CD4-positive, alpha-beta memory T cell (primary cell): ENCODE measurements at regions of chr10 and their contacts with region 1.

Region 1: DNA sequence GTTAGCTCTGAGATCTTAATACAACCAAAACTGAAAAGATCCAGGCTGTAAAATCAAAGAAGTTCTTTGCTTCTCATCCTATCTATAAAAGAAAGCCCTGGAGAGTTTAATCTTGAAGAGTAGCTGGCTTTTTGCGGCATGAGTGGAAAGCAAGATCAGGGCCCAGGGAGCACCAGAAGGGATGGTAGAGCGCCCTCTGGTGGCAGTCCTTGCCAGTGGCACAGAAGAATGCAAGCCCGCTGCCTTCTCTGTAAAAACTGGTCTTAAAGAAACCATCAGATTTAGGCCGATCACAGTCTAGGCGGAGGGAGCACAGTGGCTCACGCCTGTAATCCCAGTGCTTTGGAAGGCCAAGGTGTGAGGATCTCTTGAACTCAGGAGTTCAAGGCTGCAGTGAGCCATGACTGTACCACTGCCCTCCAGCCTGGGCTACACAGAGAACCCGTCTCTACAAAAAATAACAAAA is 35.6 kb downstream of the CPN1 start:
- DNase-seq: peak; percentile 63 to 70 (median 67)
- H3K4me3 ChIP-seq: no peak overlapping the region
- H3K4me3 Mint-ChIP-seq: no peak overlapping the region
- H3K27ac ChIP-seq: no peak overlapping the region
- H3K27ac Mint-ChIP-seq: peak overlapping the region in 1 of 7 donors; percentile 42
- H3K4me1 ChIP-seq: no peaks in the 10 kb centered on the region
- H3K4me1 Mint-ChIP-seq: no peaks in the 10 kb centered on the region
- H3K27me3 ChIP-seq: no peaks in the 10 kb centered on the region
- H3K27me3 Mint-ChIP-seq: peaks cover 1 to 16% of the 10 kb centered on the region in 2 donors

Region 2: GRCh38 chr10:99506416-99506815 is 539.6 kb before region 1 on chr10:
- CTCF ChIA-PET with region 1: no interaction called
- POLR2A ChIA-PET with region 1: no interaction called
- intact Hi-C with region 1: no loop called
- DNase-seq: no peak
- H3K4me3 ChIP-seq: no peak overlapping the region
- H3K4me3 Mint-ChIP-seq: no peak overlapping the region
- H3K27ac ChIP-seq: no peak overlapping the region
- H3K27ac Mint-ChIP-seq: no peak overlapping the region
- H3K4me1 ChIP-seq: no peaks in the 10 kb centered on the region
- H3K4me1 Mint-ChIP-seq: no peaks in the 10 kb centered on the region
- H3K27me3 ChIP-seq: no peaks in the 10 kb centered on the region
- H3K27me3 Mint-ChIP-seq: peaks cover 19 to 24% of the 10 kb centered on the region in 2 donors

Region 3: GRCh38 chr10:99854860-99855259 is 191.2 kb before region 1 on chr10:
- CTCF ChIA-PET with region 1: interaction called, 336 read pairs
- POLR2A ChIA-PET with region 1: no interaction called
- intact Hi-C with region 1: no loop called
- DNase-seq: no peak
- H3K4me3 ChIP-seq: no peak overlapping the region
- H3K4me3 Mint-ChIP-seq: no peak overlapping the region
- H3K27ac ChIP-seq: no peak overlapping the region
- H3K27ac Mint-ChIP-seq: no peak overlapping the region
- H3K4me1 ChIP-seq: no peaks in the 10 kb centered on the region
- H3K4me1 Mint-ChIP-seq: no peaks in the 10 kb centered on the region
- H3K27me3 ChIP-seq: no peaks in the 10 kb centered on the region
- H3K27me3 Mint-ChIP-seq: peaks cover 2 to 8% of the 10 kb centered on the region in 2 donors

Region 4: GRCh38 chr10:99976886-99977665 is 69.0 kb before region 1 on chr10:
- CTCF ChIA-PET with region 1: interaction called, 10 read pairs
- POLR2A ChIA-PET with region 1: no interaction called
- intact Hi-C with region 1: no loop called
- DNase-seq: no peak
- H3K4me3 ChIP-seq: no peak overlapping the region
- H3K4me3 Mint-ChIP-seq: no peak overlapping the region
- H3K27ac ChIP-seq: no peak overlapping the region
- H3K27ac Mint-ChIP-seq: no peak overlapping the region
- H3K4me1 ChIP-seq: no peaks in the 10 kb centered on the region
- H3K4me1 Mint-ChIP-seq: peaks cover 0 to 2% (median 0%) of the 10 kb centered on the region in 4 donors
- H3K27me3 ChIP-seq: no peaks in the 10 kb centered on the region
- H3K27me3 Mint-ChIP-seq: no peaks in the 10 kb centered on the region

Region 5: DNA sequence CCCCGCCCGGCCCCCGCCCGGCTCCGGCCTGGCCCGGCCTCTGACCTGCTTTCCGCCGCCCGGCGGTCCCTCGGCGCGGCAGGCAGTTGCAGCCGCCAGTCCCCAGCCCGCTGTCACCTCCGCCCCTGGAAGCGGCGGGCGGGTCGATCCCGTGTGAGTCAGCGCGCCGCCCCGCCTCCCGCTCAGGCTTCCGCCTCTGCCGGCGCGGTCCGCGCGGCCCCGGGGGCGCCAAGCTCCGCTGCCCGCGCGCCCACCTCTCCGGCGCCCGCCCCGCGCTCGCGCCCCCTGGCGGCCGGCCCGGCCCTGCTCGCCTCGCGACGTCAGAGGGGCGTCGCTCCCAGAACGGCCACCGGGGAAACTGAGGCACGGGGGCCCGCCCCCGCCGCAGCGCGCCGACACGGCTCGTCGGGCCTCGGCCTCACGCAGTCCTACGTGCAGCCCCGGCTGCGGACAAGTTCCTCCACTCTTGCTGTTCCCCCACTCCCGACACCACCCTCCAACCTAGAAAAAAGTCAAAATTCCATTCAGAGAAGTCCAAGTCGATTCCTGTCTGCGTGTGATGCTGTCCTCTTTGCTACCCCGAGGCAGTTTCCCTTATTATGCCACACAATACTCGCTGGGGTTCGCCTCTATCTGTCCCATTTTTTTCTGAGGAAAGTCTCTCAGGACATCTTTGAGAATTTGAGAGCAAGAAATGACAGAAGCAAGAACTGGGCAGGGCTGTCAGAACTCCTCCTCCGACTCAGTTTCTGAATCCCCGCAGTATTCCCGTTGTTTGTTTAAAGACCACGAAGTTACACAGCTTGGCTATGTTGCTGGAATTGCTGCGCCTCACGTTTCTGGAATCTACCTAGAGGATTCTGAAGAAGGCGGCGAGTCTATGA is 36.0 kb before region 1 on chr10 and contains the start of gene DNMBP:
- CTCF ChIA-PET with region 1: interaction called, 6 read pairs
- POLR2A ChIA-PET with region 1: no interaction called
- intact Hi-C with region 1: loop called (anchors 1 kb)
- DNase-seq: peak; percentile 75 to 81 (median 79)
- H3K4me3 ChIP-seq: peak within 1 kb of the TSS; percentile 65 to 89
- H3K4me3 Mint-ChIP-seq: peak within 1 kb of the TSS; percentile 89 to 97 (median 95)
- H3K27ac ChIP-seq: peak within 1 kb of the TSS; percentile 34
- H3K27ac Mint-ChIP-seq: peak within 1 kb of the TSS; percentile 76 to 93 (median 90)
- H3K4me1 ChIP-seq: peaks cover 19% of the 10 kb centered on the region
- H3K4me1 Mint-ChIP-seq: peaks cover 22 to 48% (median 31%) of the 10 kb centered on the region in 4 donors
- H3K27me3 ChIP-seq: no peaks in the 10 kb centered on the region
- H3K27me3 Mint-ChIP-seq: peaks cover 0 to 3% of the 10 kb centered on the region in 2 donors
- total RNA-seq, gene DNMBP: 3.8 to 4.0 TPM

Region 6: DNA sequence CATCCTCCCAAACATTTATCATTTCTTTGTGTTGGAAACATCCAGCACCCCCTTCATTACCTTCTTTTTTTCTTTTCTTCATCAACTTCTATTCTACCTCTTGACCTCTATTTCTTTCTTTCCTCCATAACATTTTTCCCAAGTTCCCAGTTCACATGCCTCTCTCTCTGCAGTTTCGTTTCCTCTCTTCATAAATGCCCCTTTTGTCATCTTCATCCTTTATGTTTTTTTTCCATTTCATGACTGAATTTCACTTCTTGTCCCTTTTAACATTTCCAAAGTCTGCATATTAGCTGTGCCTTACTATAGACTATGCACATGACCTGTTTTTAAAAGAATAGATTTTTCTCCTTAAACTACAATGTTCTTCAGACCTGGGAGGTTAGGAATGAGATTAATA is 11.9 kb after region 1 on chr10:
- CTCF ChIA-PET with region 1: interaction called, 25 read pairs
- POLR2A ChIA-PET with region 1: no interaction called
- intact Hi-C with region 1: no loop called
- DNase-seq: no peak
- H3K4me3 ChIP-seq: no peak overlapping the region
- H3K4me3 Mint-ChIP-seq: no peak overlapping the region
- H3K27ac ChIP-seq: no peak overlapping the region
- H3K27ac Mint-ChIP-seq: no peak overlapping the region
- H3K4me1 ChIP-seq: no peaks in the 10 kb centered on the region
- H3K4me1 Mint-ChIP-seq: no peaks in the 10 kb centered on the region
- H3K27me3 ChIP-seq: peaks cover 2% of the 10 kb centered on the region
- H3K27me3 Mint-ChIP-seq: peaks cover 0 to 17% of the 10 kb centered on the region in 2 donors

Region 7: DNA sequence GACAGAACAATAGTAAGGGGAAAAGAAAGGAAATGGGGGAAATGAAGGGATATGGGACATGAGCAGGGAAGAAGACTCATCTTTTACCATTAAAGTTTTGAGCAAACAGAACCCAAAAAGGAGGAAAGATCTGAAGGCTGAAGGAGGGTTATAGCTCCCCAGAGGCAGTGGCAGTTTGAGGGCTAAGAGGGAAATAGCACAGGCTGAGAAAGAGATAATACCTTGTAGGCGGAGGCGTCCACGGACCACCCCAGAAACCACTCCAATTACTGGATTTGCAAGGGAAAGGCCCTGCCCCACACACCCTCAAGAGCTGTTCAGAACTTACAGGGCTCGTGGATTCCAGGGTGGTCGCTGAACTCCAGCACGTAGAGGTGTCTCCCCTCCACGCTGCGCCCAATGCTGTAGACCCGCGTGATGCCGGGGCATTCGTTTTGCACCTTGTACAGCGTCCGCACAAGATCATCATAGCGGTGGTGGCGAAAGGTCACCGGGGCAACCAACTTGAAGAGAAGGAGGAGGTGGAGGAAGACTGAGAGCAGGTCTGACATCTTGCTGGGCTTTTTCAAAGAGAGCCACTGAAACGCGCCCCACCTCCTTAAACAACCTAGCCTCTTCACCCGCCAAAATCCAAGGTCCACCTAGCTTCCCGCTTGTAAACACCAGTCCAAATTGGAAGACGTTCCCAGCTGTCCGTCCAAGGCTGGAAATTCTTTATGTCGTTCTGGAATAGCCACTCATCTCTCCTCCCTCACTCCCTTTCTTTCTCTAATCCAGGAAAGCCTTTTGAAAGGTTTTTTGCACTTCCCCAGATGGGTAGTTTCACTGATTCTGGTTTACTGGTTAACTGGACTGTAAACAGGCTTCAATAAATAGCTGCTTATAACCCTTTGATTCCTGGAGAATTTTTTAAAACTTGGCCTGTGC is 35.3 kb after region 1 on chr10 and contains the start of gene CPN1:
- CTCF ChIA-PET with region 1: no interaction called
- POLR2A ChIA-PET with region 1: no interaction called
- intact Hi-C with region 1: no loop called
- DNase-seq: no peak
- H3K4me3 ChIP-seq: no peak within 1 kb of the TSS
- H3K4me3 Mint-ChIP-seq: no peak within 1 kb of the TSS
- H3K27ac ChIP-seq: no peak within 1 kb of the TSS
- H3K27ac Mint-ChIP-seq: no peak within 1 kb of the TSS
- H3K4me1 ChIP-seq: no peaks in the 10 kb centered on the region
- H3K4me1 Mint-ChIP-seq: no peaks in the 10 kb centered on the region
- H3K27me3 ChIP-seq: no peaks in the 10 kb centered on the region
- H3K27me3 Mint-ChIP-seq: peaks cover 15 to 22% of the 10 kb centered on the region in 2 donors
- total RNA-seq, gene CPN1: not detected